ENCODE measurements at regions of chr12 and their contacts with region 1.

Region 1: GRCh38 chr12:123097561-123098084 is 53.3 kb downstream of the PITPNM2 start:
- DNase-seq: peak; percentile 72 to 80
- ATAC-seq: peak; percentile 63 to 87 (median 82)
- H3K4me3 ChIP-seq: no peak overlapping the region
- H3K27ac ChIP-seq: peak overlapping the region in 9 of 10 donors; percentile 62 to 90 (median 85)
- H3K4me1 ChIP-seq: peaks cover 37 to 98% (median 90%) of the 10 kb centered on the region in 9 donors
- H3K27me3 ChIP-seq: no peaks in the 10 kb centered on the region
- CTCF ChIP-seq: no peak

Region 2: GRCh38 chr12:122749569-122750373 is 347.9 kb before region 1 on chr12:
- intact Hi-C with region 1: no loop called
- DNase-seq: no peak
- ATAC-seq: no peak
- H3K4me3 ChIP-seq: no peak overlapping the region
- H3K27ac ChIP-seq: no peak overlapping the region
- H3K4me1 ChIP-seq: peaks cover 0 to 24% (median 16%) of the 10 kb centered on the region in 9 donors
- H3K27me3 ChIP-seq: no peaks in the 10 kb centered on the region
- CTCF ChIP-seq: no peak

Region 3: DNA sequence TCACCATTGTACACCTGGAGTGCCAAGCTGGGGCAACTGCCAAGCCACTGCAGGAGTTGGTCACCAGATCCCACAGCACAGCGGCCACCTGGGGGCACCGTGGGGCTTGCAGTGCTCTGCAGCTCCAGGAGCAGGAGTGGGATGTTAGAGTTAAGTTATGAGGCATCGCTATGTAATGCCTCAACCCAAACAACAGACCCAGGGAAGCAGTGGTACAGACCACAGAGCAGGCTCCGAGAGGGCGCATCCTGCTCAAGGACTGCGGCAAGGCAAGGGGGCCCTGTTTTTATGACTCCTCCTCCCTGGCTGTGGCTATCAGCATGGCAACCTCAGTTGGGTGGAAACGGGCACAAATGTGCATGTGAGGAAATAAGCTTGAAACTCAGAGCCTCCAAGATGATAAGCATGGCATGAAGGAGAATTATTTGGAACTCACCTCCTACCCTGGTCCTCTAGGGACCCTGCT is 54.1 kb before region 1 on chr12:
- intact Hi-C with region 1: loop called in 2 of 10 experiments (anchors 2 to 10 kb)
- DNase-seq: peak; percentile 82 to 85
- ATAC-seq: peak; percentile 84 to 96 (median 91)
- H3K4me3 ChIP-seq: no peak overlapping the region
- H3K27ac ChIP-seq: peak overlapping the region in 7 of 10 donors; percentile 4 to 51 (median 39)
- H3K4me1 ChIP-seq: peaks cover 14 to 61% (median 42%) of the 10 kb centered on the region in 9 donors
- H3K27me3 ChIP-seq: no peaks in the 10 kb centered on the region
- CTCF ChIP-seq: peak; percentile 52 to 88 (median 72)

Region 4: GRCh38 chr12:123062681-123063486 is 34.7 kb before region 1 on chr12:
- intact Hi-C with region 1: loop called in 2 of 10 experiments (anchors 5 kb)
- DNase-seq: peak; percentile 55 to 56
- ATAC-seq: peak; percentile 43 to 81 (median 70)
- H3K4me3 ChIP-seq: no peak overlapping the region
- H3K27ac ChIP-seq: peak overlapping the region; percentile 84 to 97 (median 91)
- H3K4me1 ChIP-seq: peaks cover 57 to 97% (median 91%) of the 10 kb centered on the region in 9 donors
- H3K27me3 ChIP-seq: no peaks in the 10 kb centered on the region
- CTCF ChIP-seq: no peak

Measured in heart right ventricle (tissue), 16 donors.